K562 (cell line): ENCODE measurements at regions of chr3 and their contacts with region 1.

Region 1: DNA sequence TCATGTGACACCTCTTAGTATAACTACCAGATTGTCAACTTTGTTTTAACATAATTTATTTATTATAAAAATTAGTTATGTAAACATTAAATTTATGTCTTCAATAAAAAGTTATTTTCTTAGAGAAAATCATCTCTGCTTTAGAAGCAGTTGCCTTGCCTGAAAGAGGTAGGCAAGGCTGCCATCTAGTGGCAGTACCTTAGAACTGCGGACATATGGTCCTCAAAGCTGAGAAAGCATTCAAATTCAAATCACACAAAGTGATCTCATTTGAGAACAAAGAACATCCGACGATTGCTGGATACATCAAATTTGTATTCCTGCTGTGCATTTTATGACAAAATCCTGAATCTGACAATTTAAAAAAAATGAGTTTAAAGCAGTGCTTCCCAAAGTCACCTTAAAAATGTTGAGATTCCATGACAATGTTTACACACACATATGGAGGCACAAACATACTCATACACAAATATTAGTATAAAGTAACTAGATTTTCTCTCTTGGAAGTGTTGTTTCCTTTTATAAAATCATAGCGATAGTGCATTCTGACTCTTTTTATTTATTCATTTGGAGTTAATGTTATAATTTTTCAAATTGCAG is 617.4 kb downstream of the CADM2 start:
- DNase-seq: peak; percentile 25 to 72 (median 38)
- ATAC-seq: no peak; the same call in 2 of the 3 replicates
- H3K4me3 ChIP-seq: no peak overlapping the region
- H3K27ac ChIP-seq: no peak overlapping the region
- H3K4me1 ChIP-seq: no peaks in the 10 kb centered on the region
- H3K27me3 ChIP-seq: no peaks in the 10 kb centered on the region
- CTCF ChIP-seq: peak; percentile 41 to 71 (median 62); a peak in 5 of 6 replicates
- EP300 ChIP-seq: no peak
- POLR2A ChIP-seq: no peak
- RAD21 ChIP-seq: peak; percentile 69 to 74

Region 2: DNA sequence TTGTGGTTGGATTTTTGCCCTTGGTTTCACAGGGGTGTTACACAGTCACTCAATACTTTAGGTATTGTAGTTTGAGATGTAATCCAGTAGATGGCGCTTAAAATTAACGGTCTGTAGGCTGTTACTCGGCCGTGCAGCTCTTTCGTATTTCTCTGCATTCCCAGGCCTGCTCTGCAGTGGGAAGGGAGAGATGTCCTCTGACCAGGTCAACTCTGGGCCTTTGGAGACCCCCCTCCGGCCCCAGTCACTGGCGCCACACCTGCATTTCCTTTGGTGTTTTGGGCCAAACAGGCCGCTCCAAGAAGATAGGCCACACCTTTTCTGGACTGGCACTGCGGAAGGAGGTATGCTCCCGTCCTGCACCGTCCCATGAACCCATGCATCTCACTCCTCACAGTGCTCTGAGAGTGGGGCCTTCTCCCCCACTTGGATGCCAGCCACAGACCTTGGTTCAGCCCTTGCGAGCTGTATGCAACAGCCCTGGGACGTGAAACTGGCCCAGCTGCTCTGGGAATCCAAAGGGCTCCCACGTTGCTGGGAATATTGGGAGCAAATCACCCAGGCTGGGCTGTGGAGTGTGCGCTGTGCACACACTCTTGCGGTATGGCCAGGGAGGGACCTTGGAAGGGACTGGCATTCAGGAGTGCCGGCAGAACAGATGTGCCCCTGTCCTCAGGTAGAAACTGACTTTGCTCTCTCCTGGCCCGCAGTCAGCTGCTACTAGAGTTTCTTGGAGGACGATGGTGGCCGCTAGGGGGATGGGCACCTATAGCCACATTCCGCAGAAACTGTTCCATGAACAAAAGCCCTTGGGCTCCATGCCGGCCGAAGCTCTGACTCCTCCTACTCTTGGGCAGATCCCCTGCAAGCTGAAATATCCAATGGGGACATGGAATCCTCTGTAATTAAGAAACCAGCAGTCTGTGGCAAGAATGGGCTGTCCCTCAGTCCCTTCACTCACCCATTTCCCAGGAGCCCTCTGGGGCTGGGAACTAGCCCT is 1027.9 kb before region 1 on chr3:
- CTCF ChIA-PET with region 1: no interaction called
- POLR2A ChIA-PET with region 1: no interaction called
- in situ Hi-C with region 1: no loop called
- intact Hi-C with region 1: loop called (anchors 10 kb)
- DNase-seq: peak in 2 of 4 experiments; percentile 2 to 3
- ATAC-seq: peak; percentile 66
- H3K4me3 ChIP-seq: no peak overlapping the region
- H3K27ac ChIP-seq: no peak overlapping the region
- H3K4me1 ChIP-seq: no peaks in the 10 kb centered on the region
- H3K27me3 ChIP-seq: no peaks in the 10 kb centered on the region
- CTCF ChIP-seq: peak in 1 of 3 experiments; percentile 34; a peak in 1 of 6 replicates
- EP300 ChIP-seq: no peak
- POLR2A ChIP-seq: no peak
- RAD21 ChIP-seq: peak in 1 of 2 experiments; percentile 18; a peak in 1 of 4 replicates

Region 3: GRCh38 chr3:85652360-85652759 is 76.2 kb after region 1 on chr3:
- CTCF ChIA-PET with region 1: no interaction called
- POLR2A ChIA-PET with region 1: no interaction called
- in situ Hi-C with region 1: no loop called
- intact Hi-C with region 1: no loop called
- DNase-seq: no peak
- ATAC-seq: no peak
- H3K4me3 ChIP-seq: no peak overlapping the region
- H3K27ac ChIP-seq: no peak overlapping the region
- H3K4me1 ChIP-seq: no peaks in the 10 kb centered on the region
- H3K27me3 ChIP-seq: no peaks in the 10 kb centered on the region
- CTCF ChIP-seq: no peak
- EP300 ChIP-seq: no peak
- POLR2A ChIP-seq: no peak
- RAD21 ChIP-seq: no peak

Region 4: GRCh38 chr3:85737846-85738245 is 161.7 kb after region 1 on chr3:
- CTCF ChIA-PET with region 1: no interaction called
- POLR2A ChIA-PET with region 1: no interaction called
- in situ Hi-C with region 1: no loop called
- intact Hi-C with region 1: no loop called
- DNase-seq: no peak
- ATAC-seq: no peak
- H3K4me3 ChIP-seq: no peak overlapping the region
- H3K27ac ChIP-seq: no peak overlapping the region
- H3K4me1 ChIP-seq: no peaks in the 10 kb centered on the region
- H3K27me3 ChIP-seq: no peaks in the 10 kb centered on the region
- CTCF ChIP-seq: no peak
- EP300 ChIP-seq: no peak
- POLR2A ChIP-seq: no peak
- RAD21 ChIP-seq: no peak